ENCODE measurements at regions of chr6 and their contacts with region 1.

Region 1: DNA sequence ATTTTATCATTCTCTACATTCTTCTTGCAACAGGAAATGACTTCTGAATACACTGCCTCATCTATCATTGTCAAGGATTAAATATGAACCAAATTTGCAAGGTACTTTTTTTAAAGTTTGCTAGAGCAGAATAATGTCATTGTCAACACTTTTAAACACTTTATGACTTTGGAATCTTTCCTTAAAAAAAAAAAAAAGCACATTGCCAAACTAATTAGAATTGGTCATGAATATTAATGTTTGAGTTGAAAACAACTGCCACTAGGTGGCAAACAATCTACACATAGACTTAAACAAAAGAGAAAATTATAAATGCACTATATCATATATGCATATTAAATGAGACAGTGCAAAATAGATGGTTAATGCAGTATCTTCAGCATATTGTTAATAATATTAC is 32.5 kb upstream of the TMEM244 start:
- DNase-seq: no peak
- H3K4me3 ChIP-seq: no peak overlapping the region
- H3K27ac ChIP-seq: no peak overlapping the region
- H3K4me1 ChIP-seq: 0 out of 2 replicates have a peak, but pooled peaks cover 5% of the 10 kb centered on the region
- H3K27me3 ChIP-seq: no peaks in the 10 kb centered on the region
- CTCF ChIP-seq: peak; percentile 75

Region 2: GRCh38 chr6:129853996-129854711 is 39.5 kb before region 1 on chr6:
- CTCF ChIA-PET with region 1: no interaction called
- POLR2A ChIA-PET with region 1: no interaction called
- intact Hi-C with region 1: loop called (anchors 5 kb)
- DNase-seq: no peak
- H3K4me3 ChIP-seq: no peak overlapping the region
- H3K27ac ChIP-seq: no peak overlapping the region
- H3K4me1 ChIP-seq: peaks cover 11% of the 10 kb centered on the region
- H3K27me3 ChIP-seq: no peaks in the 10 kb centered on the region
- CTCF ChIP-seq: no peak

Region 3: DNA sequence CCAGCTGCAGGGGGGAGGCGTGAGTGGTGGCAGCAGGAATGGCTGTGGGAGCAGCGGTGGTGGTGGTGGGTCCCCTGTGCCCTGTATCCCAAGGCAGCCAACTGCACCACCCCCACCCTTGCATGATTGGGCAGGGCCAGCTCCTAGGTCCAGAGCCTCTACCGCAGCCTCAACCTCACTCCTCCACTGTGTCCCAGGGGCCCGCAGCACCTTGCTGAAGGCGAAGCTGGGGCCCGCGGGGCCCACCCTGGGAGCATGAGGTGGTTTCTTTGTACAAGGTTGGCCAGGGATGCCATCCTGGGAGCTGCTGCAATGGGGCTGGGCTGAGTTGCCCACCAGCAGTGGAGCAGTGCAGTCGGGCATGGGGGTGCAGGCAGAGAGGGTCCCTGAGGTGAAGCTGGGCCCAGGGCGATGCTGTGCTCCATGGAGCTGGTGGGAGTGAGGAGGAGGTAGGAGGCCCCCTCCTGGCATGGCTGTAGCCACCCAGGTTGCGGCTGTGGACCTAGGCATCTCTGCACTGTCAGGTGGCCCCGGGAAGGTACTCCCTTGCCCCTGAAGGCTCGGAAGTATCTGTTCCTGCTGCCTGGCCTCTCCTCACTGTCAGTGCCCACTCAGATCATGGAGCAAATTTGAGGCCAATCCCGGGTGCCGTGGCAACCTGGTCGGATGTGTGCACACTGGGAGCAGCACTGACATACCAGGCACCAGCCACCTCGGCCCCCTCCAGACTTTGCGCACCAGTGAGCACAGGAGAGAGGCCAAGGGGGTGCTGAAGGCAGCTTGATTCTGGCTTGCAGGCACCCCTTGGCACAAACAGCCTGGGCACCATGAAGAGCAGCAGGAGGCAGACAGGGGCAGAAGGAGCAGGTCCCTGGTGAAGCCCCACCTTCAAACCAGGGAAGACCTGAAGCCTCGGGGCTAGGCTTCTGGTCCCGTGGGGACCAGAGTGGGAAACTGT is 64.6 kb after region 1 on chr6:
- CTCF ChIA-PET with region 1: interaction called, 13 read pairs
- POLR2A ChIA-PET with region 1: no interaction called
- intact Hi-C with region 1: no loop called
- DNase-seq: no peak
- H3K4me3 ChIP-seq: no peak overlapping the region
- H3K27ac ChIP-seq: no peak overlapping the region
- H3K4me1 ChIP-seq: no peaks in the 10 kb centered on the region
- H3K27me3 ChIP-seq: no peaks in the 10 kb centered on the region
- CTCF ChIP-seq: no peak